ENCODE measurements at regions of chr4 and their contacts with region 1.

Region 1: DNA sequence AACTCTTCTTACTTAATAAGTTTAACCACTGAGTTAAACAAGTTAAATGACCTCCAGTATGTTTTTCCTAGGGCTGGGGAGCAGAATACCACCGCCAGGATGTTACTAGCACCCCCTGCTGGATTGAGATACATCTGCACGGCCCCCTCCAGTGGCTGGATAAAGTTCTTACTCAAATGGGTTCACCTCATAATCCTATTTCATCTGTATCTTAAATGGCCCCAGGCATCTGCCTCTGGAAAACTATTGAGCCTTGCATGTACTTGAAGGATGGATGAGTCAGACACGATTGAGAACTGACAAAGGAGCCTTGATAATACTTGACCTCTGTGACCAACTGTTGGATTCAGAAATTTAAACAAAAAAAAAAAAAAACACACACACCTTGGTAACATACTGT is 61.5 kb upstream of the MMAA start:
- H3K4me3 Mint-ChIP-seq: no peak overlapping the region
- H3K27ac Mint-ChIP-seq: no peak overlapping the region
- H3K4me1 Mint-ChIP-seq: peaks cover under 1% of the 10 kb centered on the region
- H3K27me3 Mint-ChIP-seq: no peaks in the 10 kb centered on the region

Region 2: GRCh38 chr4:145154573-145154972 is 403.1 kb before region 1 on chr4:
- intact Hi-C with region 1: loop called (anchors 5 kb)
- H3K4me3 Mint-ChIP-seq: no peak overlapping the region
- H3K27ac Mint-ChIP-seq: no peak overlapping the region
- H3K4me1 Mint-ChIP-seq: no peaks in the 10 kb centered on the region
- H3K27me3 Mint-ChIP-seq: no peaks in the 10 kb centered on the region

Region 3: DNA sequence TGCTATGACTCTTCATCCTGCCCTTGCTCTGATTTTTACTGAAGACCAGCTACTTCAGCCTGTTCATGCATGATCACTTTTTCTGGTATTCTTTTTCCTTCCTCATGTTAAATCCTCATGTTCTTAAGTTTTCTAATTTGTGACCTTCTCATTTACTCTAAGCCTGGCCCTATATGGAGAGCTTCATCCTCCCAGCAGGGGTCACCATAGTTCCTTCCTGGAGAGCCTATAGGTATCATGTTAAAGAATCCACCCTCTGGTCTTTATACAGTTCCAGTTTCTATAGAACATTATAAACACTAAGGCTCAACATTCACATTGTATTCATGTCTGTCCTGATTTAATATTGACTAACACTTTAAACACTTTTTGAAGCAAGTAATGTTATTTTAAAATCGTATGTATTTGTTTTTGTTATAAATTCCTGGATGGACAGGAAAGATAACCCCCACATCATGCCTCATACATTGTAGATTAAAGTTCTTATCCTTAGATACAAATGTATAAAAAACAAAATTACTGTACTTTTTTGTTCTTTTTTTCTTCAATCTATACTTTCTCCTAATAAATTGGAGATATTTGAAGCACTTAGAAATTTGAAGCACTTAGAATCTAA is 323.5 kb before region 1 on chr4:
- intact Hi-C with region 1: loop called (anchors 1 kb)
- H3K4me3 Mint-ChIP-seq: no peak overlapping the region
- H3K27ac Mint-ChIP-seq: no peak overlapping the region
- H3K4me1 Mint-ChIP-seq: no peaks in the 10 kb centered on the region
- H3K27me3 Mint-ChIP-seq: peaks cover 2% of the 10 kb centered on the region